ENCODE measurements at regions of chr1 and their contacts with region 1.

Region 1: GRCh38 chr1:81449786-81450185 is 350.9 kb upstream of the ADGRL2 start:
- DNase-seq: no peak
- H3K4me3 ChIP-seq: no peak overlapping the region
- H3K27ac ChIP-seq: no peak overlapping the region
- H3K4me1 ChIP-seq: no peaks in the 10 kb centered on the region
- H3K27me3 ChIP-seq: no peaks in the 10 kb centered on the region
- CTCF ChIP-seq: no peak

Region 2: GRCh38 chr1:81430955-81431623 is 18.7 kb before region 1 on chr1:
- intact Hi-C with region 1: loop called (anchors 2 kb)
- DNase-seq: no peak
- H3K4me3 ChIP-seq: no peak overlapping the region
- H3K27ac ChIP-seq: no peak overlapping the region
- H3K4me1 ChIP-seq: no peaks in the 10 kb centered on the region
- H3K27me3 ChIP-seq: no peaks in the 10 kb centered on the region
- CTCF ChIP-seq: no peak